ENCODE measurements at regions of chr22 and their contacts with region 1.

Region 1: GRCh38 chr22:24768537-24769374 is 5.8 kb downstream of the PIWIL3 start:
- DNase-seq: peak in 5 of 9 donors; percentile 12 to 48 (median 21)
- ATAC-seq: peak; percentile 42
- H3K4me3 ChIP-seq: no peak overlapping the region
- H3K4me3 Mint-ChIP-seq: no peak overlapping the region
- H3K27ac ChIP-seq: no peak overlapping the region
- H3K27ac Mint-ChIP-seq: no peak overlapping the region
- H3K4me1 ChIP-seq: no peaks in the 10 kb centered on the region
- H3K4me1 Mint-ChIP-seq: peaks cover 0 to 6% (median 0%) of the 10 kb centered on the region in 7 donors
- H3K27me3 ChIP-seq: no peaks in the 10 kb centered on the region
- H3K27me3 Mint-ChIP-seq: peaks cover 0 to 19% (median 5%) of the 10 kb centered on the region in 5 donors

Region 2: GRCh38 chr22:24845041-24845898 is 76.5 kb after region 1 on chr22:
- CTCF ChIA-PET with region 1: interaction called, 25 read pairs
- POLR2A ChIA-PET with region 1: no interaction called
- intact Hi-C with region 1: loop called in 1 of 2 experiments (anchors 1 kb)
- DNase-seq: no peak
- ATAC-seq: peak; percentile 61
- H3K4me3 ChIP-seq: no peak overlapping the region
- H3K4me3 Mint-ChIP-seq: peak overlapping the region in 1 of 10 donors; percentile 43
- H3K27ac ChIP-seq: no peak overlapping the region
- H3K27ac Mint-ChIP-seq: no peak overlapping the region
- H3K4me1 ChIP-seq: peaks cover 0 to 12% of the 10 kb centered on the region in 2 donors
- H3K4me1 Mint-ChIP-seq: peaks cover 0 to 12% (median 4%) of the 10 kb centered on the region in 7 donors
- H3K27me3 ChIP-seq: no peaks in the 10 kb centered on the region
- H3K27me3 Mint-ChIP-seq: peaks cover 0 to 4% (median 0%) of the 10 kb centered on the region in 5 donors

Measured in naive thymus-derived CD4-positive, alpha-beta T cell (primary cell).